Naive thymus-derived CD4-positive, alpha-beta T cell (primary cell): ENCODE measurements at regions of chr19 and their contacts with region 1.

Region 1: GRCh38 chr19:8505680-8506401 is 3.4 kb upstream of the PRAM1 start:
- DNase-seq: peak; percentile 40 to 80 (median 65)
- ATAC-seq: peak; percentile 74
- H3K4me3 ChIP-seq: peak overlapping the region; percentile 75
- H3K4me3 Mint-ChIP-seq: peak overlapping the region; percentile 88 to 97 (median 92)
- H3K27ac ChIP-seq: peak overlapping the region; percentile 76
- H3K27ac Mint-ChIP-seq: peak overlapping the region; percentile 75 to 92 (median 86)
- H3K4me1 ChIP-seq: peaks cover 5 to 15% of the 10 kb centered on the region in 2 donors
- H3K4me1 Mint-ChIP-seq: peaks cover 9 to 29% (median 20%) of the 10 kb centered on the region in 7 donors
- H3K27me3 ChIP-seq: no peaks in the 10 kb centered on the region
- H3K27me3 Mint-ChIP-seq: no peaks in the 10 kb centered on the region

Region 2: GRCh38 chr19:8269724-8270123 is 236.1 kb before region 1 on chr19:
- CTCF ChIA-PET with region 1: no interaction called
- POLR2A ChIA-PET with region 1: no interaction called
- intact Hi-C with region 1: loop called in 1 of 2 experiments (anchors 5 kb)
- DNase-seq: no peak
- ATAC-seq: no peak
- H3K4me3 ChIP-seq: peak overlapping the region; percentile 98
- H3K4me3 Mint-ChIP-seq: peak overlapping the region; percentile 85 to 97 (median 93)
- H3K27ac ChIP-seq: peak overlapping the region; percentile 88
- H3K27ac Mint-ChIP-seq: peak overlapping the region; percentile 66 to 95 (median 93)
- H3K4me1 ChIP-seq: peaks cover 0 to 6% of the 10 kb centered on the region in 2 donors
- H3K4me1 Mint-ChIP-seq: peaks cover 7 to 25% (median 13%) of the 10 kb centered on the region in 7 donors
- H3K27me3 ChIP-seq: no peaks in the 10 kb centered on the region
- H3K27me3 Mint-ChIP-seq: no peaks in the 10 kb centered on the region

Region 3: GRCh38 chr19:8412783-8413628 is 92.8 kb before region 1 on chr19 and contains the start of gene MARCHF2:
- CTCF ChIA-PET with region 1: interaction called, 6 read pairs
- POLR2A ChIA-PET with region 1: interaction called, 4 read pairs
- intact Hi-C with region 1: loop called (anchors 1 kb)
- DNase-seq: peak; percentile 91 to 96 (median 93)
- ATAC-seq: peak; percentile 100
- H3K4me3 ChIP-seq: peak within 1 kb of the TSS; percentile 72
- H3K4me3 Mint-ChIP-seq: peak within 1 kb of the TSS; percentile 58 to 85 (median 71)
- H3K27ac ChIP-seq: peak within 1 kb of the TSS; percentile 76
- H3K27ac Mint-ChIP-seq: peak within 1 kb of the TSS in 6 of 9 donors; percentile 11 to 84 (median 34)
- H3K4me1 ChIP-seq: peaks cover 0 to 6% of the 10 kb centered on the region in 2 donors
- H3K4me1 Mint-ChIP-seq: peaks cover 0 to 15% (median 13%) of the 10 kb centered on the region in 7 donors
- H3K27me3 ChIP-seq: no peaks in the 10 kb centered on the region
- H3K27me3 Mint-ChIP-seq: no peaks in the 10 kb centered on the region
- total RNA-seq, gene MARCHF2: 18.0 to 42.1 (median 23.4) TPM

Region 4: DNA sequence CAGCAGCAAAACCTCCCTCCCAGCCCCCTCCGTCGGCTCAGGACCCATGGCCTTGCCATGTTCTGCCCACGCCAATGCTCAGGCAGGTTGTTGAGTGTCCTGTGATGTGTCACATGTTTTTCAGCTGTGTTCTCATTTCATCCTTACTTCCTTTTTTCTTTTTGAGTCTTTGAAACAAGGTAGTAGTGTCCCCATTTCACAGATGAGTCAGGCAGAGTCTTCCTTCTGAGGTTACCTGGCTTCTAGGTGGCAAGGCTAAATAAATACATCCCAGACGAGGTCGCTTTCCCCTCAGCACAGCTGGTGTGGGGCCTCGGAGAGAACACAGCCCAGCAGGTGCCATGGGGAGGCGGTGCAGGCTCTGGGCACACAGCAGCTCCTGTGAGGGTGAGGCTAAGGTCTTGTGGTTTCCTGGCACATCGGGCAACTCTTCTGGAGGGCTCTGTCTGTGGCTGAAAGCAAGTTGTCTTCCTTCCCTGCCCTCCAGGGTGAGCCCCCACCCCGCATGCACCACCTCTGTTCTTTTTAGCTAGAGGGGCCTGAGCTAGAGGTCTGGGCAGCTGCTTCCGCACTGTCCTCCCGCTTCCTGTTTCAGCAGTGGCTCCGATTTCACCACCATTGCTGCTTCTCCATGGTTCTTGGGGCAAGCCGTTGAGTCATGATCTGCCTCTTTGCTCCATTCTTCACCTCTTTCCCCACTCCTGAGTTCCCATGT is 18.5 kb before region 1 on chr19:
- CTCF ChIA-PET with region 1: interaction called, 18 read pairs
- POLR2A ChIA-PET with region 1: interaction called, 14 read pairs
- intact Hi-C with region 1: loop called (anchors 1 kb)
- DNase-seq: peak; percentile 38 to 73 (median 59)
- ATAC-seq: peak; percentile 79
- H3K4me3 ChIP-seq: no peak overlapping the region
- H3K4me3 Mint-ChIP-seq: peak overlapping the region; percentile 33 to 85 (median 68)
- H3K27ac ChIP-seq: peak overlapping the region; percentile 48
- H3K27ac Mint-ChIP-seq: peak overlapping the region; percentile 82 to 95 (median 90)
- H3K4me1 ChIP-seq: peaks cover 15 to 26% of the 10 kb centered on the region in 2 donors
- H3K4me1 Mint-ChIP-seq: peaks cover 29 to 47% (median 34%) of the 10 kb centered on the region in 7 donors
- H3K27me3 ChIP-seq: no peaks in the 10 kb centered on the region
- H3K27me3 Mint-ChIP-seq: no peaks in the 10 kb centered on the region

Region 5: GRCh38 chr19:8494158-8494557 is 11.7 kb before region 1 on chr19:
- CTCF ChIA-PET with region 1: interaction called, 5 read pairs
- POLR2A ChIA-PET with region 1: interaction called, 12 read pairs
- intact Hi-C with region 1: no loop called
- DNase-seq: no peak
- ATAC-seq: peak; percentile 54
- H3K4me3 ChIP-seq: no peak overlapping the region
- H3K4me3 Mint-ChIP-seq: peak overlapping the region in 7 of 10 donors; percentile 29 to 62 (median 41)
- H3K27ac ChIP-seq: peak overlapping the region; percentile 55
- H3K27ac Mint-ChIP-seq: peak overlapping the region; percentile 49 to 87 (median 75)
- H3K4me1 ChIP-seq: peaks cover 0 to 10% of the 10 kb centered on the region in 2 donors
- H3K4me1 Mint-ChIP-seq: peaks cover 5 to 33% (median 16%) of the 10 kb centered on the region in 7 donors
- H3K27me3 ChIP-seq: no peaks in the 10 kb centered on the region
- H3K27me3 Mint-ChIP-seq: no peaks in the 10 kb centered on the region

Region 6: GRCh38 chr19:9054765-9055164 is 548.9 kb after region 1 on chr19:
- CTCF ChIA-PET with region 1: no interaction called
- POLR2A ChIA-PET with region 1: no interaction called
- intact Hi-C with region 1: no loop called
- DNase-seq: no peak
- ATAC-seq: no peak
- H3K4me3 ChIP-seq: no peak overlapping the region
- H3K4me3 Mint-ChIP-seq: no peak overlapping the region
- H3K27ac ChIP-seq: no peak overlapping the region
- H3K27ac Mint-ChIP-seq: no peak overlapping the region
- H3K4me1 ChIP-seq: no peaks in the 10 kb centered on the region
- H3K4me1 Mint-ChIP-seq: no peaks in the 10 kb centered on the region
- H3K27me3 ChIP-seq: no peaks in the 10 kb centered on the region
- H3K27me3 Mint-ChIP-seq: peaks cover 0 to 4% (median 3%) of the 10 kb centered on the region in 5 donors

Region 7: GRCh38 chr19:9128171-9128570 is 622.3 kb after region 1 on chr19:
- CTCF ChIA-PET with region 1: no interaction called
- POLR2A ChIA-PET with region 1: no interaction called
- intact Hi-C with region 1: no loop called
- DNase-seq: no peak
- ATAC-seq: no peak
- H3K4me3 ChIP-seq: no peak overlapping the region
- H3K4me3 Mint-ChIP-seq: no peak overlapping the region
- H3K27ac ChIP-seq: no peak overlapping the region
- H3K27ac Mint-ChIP-seq: no peak overlapping the region
- H3K4me1 ChIP-seq: no peaks in the 10 kb centered on the region
- H3K4me1 Mint-ChIP-seq: peaks cover 0 to 9% (median 8%) of the 10 kb centered on the region in 7 donors
- H3K27me3 ChIP-seq: no peaks in the 10 kb centered on the region
- H3K27me3 Mint-ChIP-seq: peaks cover 0 to 44% (median 27%) of the 10 kb centered on the region in 5 donors